ENCODE measurements at regions of chr3 and their contacts with region 1.

Region 1: GRCh38 chr3:49007068-49007770 is at the start of gene WDR6:
- DNase-seq: peak; percentile 98
- H3K4me3 ChIP-seq: peak within 1 kb of the TSS; percentile 55 to 67
- H3K27ac ChIP-seq: peak within 1 kb of the TSS; percentile 93 to 97
- H3K4me1 ChIP-seq: peaks cover 13% of the 10 kb centered on the region
- H3K27me3 ChIP-seq: no peaks in the 10 kb centered on the region
- CTCF ChIP-seq: peak; percentile 37 to 73 (median 56)
- POLR2A ChIP-seq: peak; percentile 75
- total RNA-seq, gene WDR6: 128 to 223 TPM

Region 2: DNA sequence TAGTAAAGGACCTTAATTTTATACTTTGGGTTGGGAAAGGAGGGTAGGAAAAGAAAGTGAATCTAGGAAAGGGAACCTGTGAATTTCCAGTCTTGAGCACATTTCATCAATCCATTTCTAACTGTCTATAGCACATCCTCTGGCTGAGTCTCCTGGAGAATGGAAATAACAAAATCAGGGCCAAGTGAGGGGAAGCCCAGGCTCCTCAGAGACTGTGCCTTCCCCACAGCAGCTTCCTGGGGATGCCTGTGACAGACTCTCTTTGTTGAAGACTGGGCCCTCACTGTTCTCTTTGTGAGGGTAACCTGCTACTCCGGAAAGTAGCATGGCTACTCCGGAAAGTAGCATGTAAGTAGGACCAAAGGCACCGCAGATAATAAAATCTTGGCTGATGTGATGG is 1405.9 kb before region 1 on chr3:
- intact Hi-C with region 1: no loop called
- DNase-seq: no peak
- H3K4me3 ChIP-seq: no peak overlapping the region
- H3K27ac ChIP-seq: no peak overlapping the region
- H3K4me1 ChIP-seq: no peaks in the 10 kb centered on the region
- H3K27me3 ChIP-seq: no peaks in the 10 kb centered on the region
- CTCF ChIP-seq: no peak
- POLR2A ChIP-seq: no peak

Region 3: DNA sequence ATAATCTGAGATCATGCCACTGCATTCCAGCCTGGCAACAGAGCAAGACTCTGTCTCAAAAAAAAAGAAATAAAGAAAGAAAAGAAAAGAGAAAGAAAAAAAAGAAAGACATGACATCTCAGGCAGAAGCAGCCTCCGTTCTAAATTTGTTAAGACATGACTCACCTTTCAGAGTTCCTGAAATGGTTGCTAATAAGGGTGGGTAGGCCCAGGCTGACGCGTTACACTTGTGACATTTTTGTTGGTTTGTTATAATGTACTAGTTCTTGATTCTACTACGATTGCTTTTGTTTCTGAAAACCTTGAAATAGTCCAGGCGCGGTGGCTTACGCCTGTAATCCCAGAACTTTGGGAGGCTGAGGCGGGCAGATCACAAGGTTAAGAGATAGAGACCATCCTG is 129.5 kb before region 1 on chr3:
- intact Hi-C with region 1: no loop called
- DNase-seq: no peak
- H3K4me3 ChIP-seq: no peak overlapping the region
- H3K27ac ChIP-seq: no peak overlapping the region
- H3K4me1 ChIP-seq: no peaks in the 10 kb centered on the region
- H3K27me3 ChIP-seq: no peaks in the 10 kb centered on the region
- CTCF ChIP-seq: no peak
- POLR2A ChIP-seq: no peak

Region 4: GRCh38 chr3:48918388-48919214 is 88.6 kb before region 1 on chr3 and contains the start of gene ARIH2:
- intact Hi-C with region 1: loop called (anchors 5 kb)
- DNase-seq: peak; percentile 84
- H3K4me3 ChIP-seq: peak within 1 kb of the TSS; percentile 71 to 80
- H3K27ac ChIP-seq: peak within 1 kb of the TSS; percentile 92 to 95
- H3K4me1 ChIP-seq: no peaks in the 10 kb centered on the region
- H3K27me3 ChIP-seq: no peaks in the 10 kb centered on the region
- CTCF ChIP-seq: peak in 1 of 4 experiments; percentile 30
- POLR2A ChIP-seq: peak; percentile 66
- total RNA-seq, gene ARIH2: 70.9 to 125 TPM

Region 5: DNA sequence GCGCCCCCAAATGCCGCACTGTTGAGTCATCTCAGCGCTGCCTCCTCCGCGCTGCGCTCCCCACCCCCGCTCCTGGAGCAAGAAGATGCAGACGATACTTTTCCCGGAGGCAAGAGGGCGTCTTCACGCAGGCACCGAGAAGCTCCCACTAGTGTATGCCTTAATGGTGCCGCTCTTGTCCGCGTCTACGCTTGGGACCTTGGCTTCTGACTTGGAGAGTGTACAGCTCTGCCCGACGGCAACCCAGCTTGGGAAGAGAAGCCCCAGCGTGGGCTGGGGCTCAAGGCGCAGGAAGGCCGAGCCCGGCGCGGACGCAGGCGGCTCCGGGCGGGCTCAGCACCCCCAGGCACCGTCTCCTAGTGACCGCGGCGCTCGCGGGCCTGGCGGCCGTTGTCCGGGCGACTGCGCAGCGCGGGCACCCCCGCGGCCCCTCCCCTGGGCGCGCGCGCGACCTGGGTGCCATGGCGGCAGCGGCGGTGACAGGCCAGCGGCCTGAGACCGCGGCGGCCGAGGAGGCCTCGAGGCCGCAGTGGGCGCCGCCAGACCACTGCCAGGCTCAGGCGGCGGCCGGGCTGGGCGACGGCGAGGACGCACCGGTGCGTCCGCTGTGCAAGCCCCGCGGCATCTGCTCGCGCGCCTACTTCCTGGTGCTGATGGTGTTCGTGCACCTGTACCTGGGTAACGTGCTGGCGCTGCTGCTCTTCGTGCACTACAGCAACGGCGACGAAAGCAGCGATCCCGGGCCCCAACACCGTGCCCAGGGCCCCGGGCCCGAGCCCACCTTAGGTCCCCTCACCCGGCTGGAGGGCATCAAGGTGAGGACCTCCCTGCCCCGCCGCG is 17.2 kb before region 1 on chr3 and contains the start of gene P4HTM:
- intact Hi-C with region 1: loop called (anchors 2 kb)
- DNase-seq: peak; percentile 80
- H3K4me3 ChIP-seq: peak within 1 kb of the TSS; percentile 74 to 75
- H3K27ac ChIP-seq: peak within 1 kb of the TSS; percentile 85 to 88
- H3K4me1 ChIP-seq: peaks cover 3% of the 10 kb centered on the region
- H3K27me3 ChIP-seq: no peaks in the 10 kb centered on the region
- CTCF ChIP-seq: peak in 3 of 4 experiments; percentile 23 to 48 (median 36)
- POLR2A ChIP-seq: peak; percentile 34
- total RNA-seq, gene P4HTM: 56.0 to 101 TPM

Region 6: DNA sequence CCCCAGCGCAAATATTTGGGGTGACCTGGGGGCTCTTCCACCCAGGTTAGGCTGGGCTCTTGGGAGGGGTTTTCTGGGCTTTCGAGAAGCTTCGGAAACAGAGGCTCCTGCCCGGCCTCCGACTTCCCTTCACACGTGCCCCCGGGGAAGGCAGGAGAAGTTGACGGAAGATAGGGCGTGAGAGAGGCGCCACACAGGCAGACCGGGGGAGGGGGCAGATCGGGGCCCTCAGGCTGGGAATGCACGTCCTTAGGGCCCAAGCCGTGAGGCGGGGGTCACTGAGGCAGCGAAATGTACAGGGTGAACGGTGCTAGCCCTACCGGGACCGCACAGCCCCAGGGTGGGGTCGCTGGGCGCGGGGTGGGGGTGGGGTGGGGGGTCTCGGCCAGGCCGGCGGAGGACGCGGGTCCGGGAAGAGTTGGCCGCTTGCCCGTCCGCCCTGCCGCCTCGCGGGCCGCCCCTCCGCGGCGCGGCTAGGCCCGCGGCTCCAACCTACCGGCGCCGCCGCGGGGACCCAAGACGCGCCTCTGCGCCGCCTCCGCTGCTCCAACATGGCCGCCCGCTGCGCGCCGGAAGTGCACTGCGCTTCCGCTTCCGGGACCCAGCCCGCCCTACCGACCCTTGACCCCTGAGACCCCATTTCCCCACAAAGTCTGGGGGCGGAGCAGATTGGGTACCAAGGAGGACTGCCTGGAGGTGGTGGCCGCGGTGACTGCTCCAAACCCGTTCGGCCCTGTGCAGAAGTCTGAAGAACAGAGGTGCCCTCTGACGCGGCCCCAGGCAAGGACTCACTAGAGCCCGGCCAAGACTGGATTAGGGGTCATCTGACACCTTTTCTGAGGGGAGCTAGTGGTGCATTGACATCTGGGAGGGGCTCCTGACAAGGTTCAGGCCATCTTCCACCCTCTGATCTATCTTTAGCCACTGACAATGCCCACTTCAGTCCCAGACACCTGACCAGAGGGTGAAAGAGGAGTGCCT is 158.8 kb after region 1 on chr3 and contains the start of gene CCDC71:
- intact Hi-C with region 1: no loop called
- DNase-seq: peak; percentile 23
- H3K4me3 ChIP-seq: peak within 1 kb of the TSS; percentile 87 to 98
- H3K27ac ChIP-seq: peak within 1 kb of the TSS; percentile 82 to 86
- H3K4me1 ChIP-seq: peaks cover 5% of the 10 kb centered on the region
- H3K27me3 ChIP-seq: no peaks in the 10 kb centered on the region
- CTCF ChIP-seq: no peak
- POLR2A ChIP-seq: peak; percentile 16
- total RNA-seq, gene CCDC71: 44.2 to 47.0 TPM